ENCODE measurements at regions of chr19 and their contacts with region 1.

Region 1: GRCh38 chr19:36132489-36132891 is 7.4 kb upstream of the CAPNS1 start:
- DNase-seq: peak; percentile 98
- ATAC-seq: peak; percentile 65
- H3K4me3 ChIP-seq: no peak overlapping the region
- H3K27ac ChIP-seq: peak overlapping the region; percentile 72
- H3K4me1 ChIP-seq: peaks cover 35% of the 10 kb centered on the region
- H3K27me3 ChIP-seq: no peaks in the 10 kb centered on the region
- CTCF ChIP-seq: no peak

Region 2: DNA sequence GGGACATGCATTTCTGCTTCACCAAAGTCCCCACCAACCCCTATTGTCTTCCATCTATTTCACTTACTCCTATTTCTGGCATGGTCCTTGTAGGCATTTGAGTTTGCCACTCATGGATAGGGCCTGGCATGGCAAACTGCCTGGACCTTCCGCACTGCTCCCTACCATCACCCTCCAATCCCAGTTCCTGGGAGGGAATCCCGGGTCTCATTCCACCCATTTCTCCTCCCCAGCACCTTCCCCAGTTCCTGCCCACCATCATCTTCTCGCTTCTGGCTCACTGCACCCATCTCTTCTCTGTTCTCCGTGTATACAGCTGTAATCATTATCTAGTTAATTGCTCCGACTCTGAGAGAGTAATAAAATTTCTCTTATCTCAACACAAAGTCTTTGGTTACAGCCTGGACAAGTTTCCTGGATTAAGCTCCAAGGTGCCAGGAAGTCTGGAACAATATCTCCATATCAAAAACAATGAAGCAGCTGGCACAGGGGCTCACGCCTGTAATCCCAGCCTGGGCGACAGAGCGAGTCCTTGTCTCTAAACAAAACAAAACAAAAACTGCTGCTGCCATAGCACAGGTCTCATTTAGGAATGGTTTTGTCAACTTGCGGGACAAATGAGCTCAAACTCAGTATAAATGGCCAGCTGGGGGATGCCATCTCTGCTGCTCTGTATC is 36.7 kb after region 1 on chr19:
- CTCF ChIA-PET with region 1: no interaction called
- POLR2A ChIA-PET with region 1: interaction called, 3 read pairs
- intact Hi-C with region 1: loop called (anchors 1 kb)
- DNase-seq: no peak
- ATAC-seq: no peak
- H3K4me3 ChIP-seq: no peak overlapping the region
- H3K27ac ChIP-seq: no peak overlapping the region
- H3K4me1 ChIP-seq: no peaks in the 10 kb centered on the region
- H3K27me3 ChIP-seq: no peaks in the 10 kb centered on the region
- CTCF ChIP-seq: no peak

Measured in PC-3 (cell line).